PC-9 (cell line): ENCODE measurements at regions of chr7 and their contacts with region 1.

Region 1: GRCh38 chr7:33932832-33933468 is 27.6 kb downstream of the BMPER start:
- DNase-seq: peak; percentile 59 to 77
- H3K4me3 ChIP-seq: no peak overlapping the region
- H3K27ac ChIP-seq: no peak overlapping the region
- H3K4me1 ChIP-seq: no peaks in the 10 kb centered on the region
- H3K27me3 ChIP-seq: 0 out of 2 replicates have a peak, but pooled peaks cover 9% of the 10 kb centered on the region
- CTCF ChIP-seq: peak; percentile 98

Region 2: GRCh38 chr7:33185786-33186185 is 747.2 kb before region 1 on chr7:
- CTCF ChIA-PET with region 1: no interaction called
- POLR2A ChIA-PET with region 1: no interaction called
- intact Hi-C with region 1: loop called (anchors 1 kb)
- DNase-seq: peak; percentile 23 to 47
- H3K4me3 ChIP-seq: no peak overlapping the region
- H3K27ac ChIP-seq: no peak overlapping the region
- H3K4me1 ChIP-seq: no peaks in the 10 kb centered on the region
- H3K27me3 ChIP-seq: no peaks in the 10 kb centered on the region
- CTCF ChIP-seq: peak; percentile 85

Region 3: DNA sequence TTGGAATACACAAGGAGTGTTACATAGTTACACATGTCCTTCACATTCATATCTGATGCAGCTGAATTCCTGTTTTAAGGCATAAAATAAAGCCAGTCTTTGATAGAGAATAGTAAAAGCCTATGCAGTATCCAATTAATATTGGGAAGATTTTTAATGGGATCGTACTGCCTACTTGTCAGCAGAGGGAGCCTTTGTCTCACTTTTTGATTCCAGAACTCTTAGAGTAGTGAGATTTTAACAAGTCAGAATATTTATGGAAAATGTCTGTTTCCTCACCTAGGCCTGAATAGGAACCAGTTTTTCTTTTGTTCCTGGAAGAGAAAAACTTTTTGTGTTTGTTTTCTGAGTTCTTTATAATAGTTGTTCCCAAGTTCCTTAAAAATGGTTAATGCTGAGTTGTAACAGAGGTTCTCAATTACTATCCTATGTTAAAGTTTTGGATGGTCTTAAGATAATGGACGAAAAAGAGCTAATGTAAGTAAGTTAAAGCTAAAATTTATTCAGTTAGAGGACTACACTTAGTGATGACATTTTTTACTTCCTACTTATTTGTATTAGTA is 689.5 kb before region 1 on chr7:
- CTCF ChIA-PET with region 1: interaction called, 5 read pairs
- POLR2A ChIA-PET with region 1: no interaction called
- intact Hi-C with region 1: loop called (anchors 1 kb)
- DNase-seq: peak in 1 of 2 experiments; percentile 47
- H3K4me3 ChIP-seq: no peak overlapping the region
- H3K27ac ChIP-seq: no peak overlapping the region
- H3K4me1 ChIP-seq: no peaks in the 10 kb centered on the region
- H3K27me3 ChIP-seq: no peaks in the 10 kb centered on the region
- CTCF ChIP-seq: peak; percentile 91

Region 4: DNA sequence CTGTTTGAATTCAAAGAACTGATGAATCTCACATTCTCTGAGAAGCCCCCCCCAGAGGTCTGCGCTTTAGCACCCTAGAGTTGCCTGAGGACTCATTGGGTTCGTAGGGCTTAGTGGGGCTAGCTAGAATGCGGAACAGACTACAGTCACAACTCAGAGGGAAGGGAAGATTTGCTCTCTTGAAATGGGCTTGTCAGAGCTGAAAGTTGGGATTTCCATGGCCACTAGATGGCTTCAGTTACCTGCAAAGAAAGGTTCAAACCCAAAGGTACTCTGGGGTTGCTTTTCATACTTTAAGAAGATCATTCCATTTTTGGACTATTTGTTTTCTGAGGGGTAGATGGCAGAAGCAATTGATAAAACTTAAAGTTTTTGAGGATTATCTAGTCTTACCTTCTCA is 598.6 kb before region 1 on chr7:
- CTCF ChIA-PET with region 1: no interaction called
- POLR2A ChIA-PET with region 1: no interaction called
- intact Hi-C with region 1: loop called (anchors 2 kb)
- DNase-seq: no peak
- H3K4me3 ChIP-seq: no peak overlapping the region
- H3K27ac ChIP-seq: no peak overlapping the region
- H3K4me1 ChIP-seq: no peaks in the 10 kb centered on the region
- H3K27me3 ChIP-seq: no peaks in the 10 kb centered on the region
- CTCF ChIP-seq: peak; percentile 62

Region 5: DNA sequence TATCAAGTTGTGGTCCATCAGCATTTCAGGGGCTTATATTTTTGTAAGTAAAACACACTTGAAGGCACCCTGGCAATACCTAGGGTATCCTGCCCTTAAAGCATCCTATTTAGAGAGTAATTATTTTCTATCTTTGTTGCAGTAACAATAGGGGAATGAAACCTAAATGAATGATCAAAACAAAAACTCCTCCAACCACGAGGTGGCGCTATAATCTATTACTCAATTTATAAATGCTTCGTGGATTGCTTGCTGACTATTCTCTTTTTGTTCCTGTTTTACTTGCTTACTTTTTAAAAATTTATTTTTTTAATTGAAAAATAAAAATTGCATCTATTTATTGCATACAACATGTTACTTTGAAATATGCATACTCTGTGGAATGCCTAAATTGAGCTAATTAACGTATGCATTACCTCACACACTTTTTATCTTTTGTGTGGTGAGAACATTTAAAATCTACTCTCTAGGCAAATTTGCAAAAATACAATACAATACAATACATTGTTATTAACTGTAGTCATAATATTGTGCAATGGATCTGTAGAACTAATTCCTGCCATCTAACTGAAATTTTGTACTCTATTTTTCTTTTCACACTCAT is 175.3 kb before region 1 on chr7:
- CTCF ChIA-PET with region 1: interaction called, 7 read pairs
- POLR2A ChIA-PET with region 1: no interaction called
- intact Hi-C with region 1: loop called (anchors 5 kb)
- DNase-seq: peak in 1 of 2 experiments; percentile 14
- H3K4me3 ChIP-seq: no peak overlapping the region
- H3K27ac ChIP-seq: no peak overlapping the region
- H3K4me1 ChIP-seq: no peaks in the 10 kb centered on the region
- H3K27me3 ChIP-seq: peaks cover 37% of the 10 kb centered on the region
- CTCF ChIP-seq: peak; percentile 89

Region 6: DNA sequence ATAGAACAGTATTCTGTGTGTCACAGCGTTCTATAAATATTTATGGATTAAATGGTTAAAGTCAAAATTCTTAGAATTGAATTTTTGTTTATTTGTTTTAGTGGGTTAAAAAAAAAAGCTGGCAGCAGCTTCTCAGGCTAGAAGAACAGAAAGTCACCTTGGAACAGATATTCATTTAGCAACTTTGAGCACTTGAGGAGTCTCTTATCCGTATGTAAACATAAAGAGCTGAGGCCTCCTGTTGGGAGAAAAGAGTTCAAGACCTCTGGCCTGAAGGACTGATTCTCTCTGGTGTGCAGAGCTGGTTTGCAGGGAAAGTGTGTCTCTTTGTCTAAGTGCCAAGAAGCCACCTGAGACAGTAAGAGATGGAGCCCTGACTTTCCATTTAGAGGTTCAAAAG is 1652.0 kb after region 1 on chr7:
- CTCF ChIA-PET with region 1: interaction called, 10 read pairs
- POLR2A ChIA-PET with region 1: no interaction called
- intact Hi-C with region 1: no loop called
- DNase-seq: no peak
- H3K4me3 ChIP-seq: no peak overlapping the region
- H3K27ac ChIP-seq: no peak overlapping the region
- H3K4me1 ChIP-seq: no peaks in the 10 kb centered on the region
- H3K27me3 ChIP-seq: peaks cover 5% of the 10 kb centered on the region; the same call in 1 of the 2 replicates
- CTCF ChIP-seq: no peak